Esophagus muscularis mucosa (tissue), 4 donors: ENCODE measurements at regions of chr12 and their contacts with region 1.

Region 1: GRCh38 chr12:8078398-8078797 is 3.7 kb upstream of the NECAP1 start:
- DNase-seq: no peak
- H3K4me3 ChIP-seq: no peak overlapping the region
- H3K27ac ChIP-seq: no peak overlapping the region
- H3K4me1 ChIP-seq: peaks cover 12 to 18% (median 15%) of the 10 kb centered on the region in 4 donors
- H3K27me3 ChIP-seq: no peaks in the 10 kb centered on the region
- CTCF ChIP-seq: peak in 1 of 3 experiments; percentile 20
- EP300 ChIP-seq: no peak
- POLR2A ChIP-seq: no peak

Region 2: DNA sequence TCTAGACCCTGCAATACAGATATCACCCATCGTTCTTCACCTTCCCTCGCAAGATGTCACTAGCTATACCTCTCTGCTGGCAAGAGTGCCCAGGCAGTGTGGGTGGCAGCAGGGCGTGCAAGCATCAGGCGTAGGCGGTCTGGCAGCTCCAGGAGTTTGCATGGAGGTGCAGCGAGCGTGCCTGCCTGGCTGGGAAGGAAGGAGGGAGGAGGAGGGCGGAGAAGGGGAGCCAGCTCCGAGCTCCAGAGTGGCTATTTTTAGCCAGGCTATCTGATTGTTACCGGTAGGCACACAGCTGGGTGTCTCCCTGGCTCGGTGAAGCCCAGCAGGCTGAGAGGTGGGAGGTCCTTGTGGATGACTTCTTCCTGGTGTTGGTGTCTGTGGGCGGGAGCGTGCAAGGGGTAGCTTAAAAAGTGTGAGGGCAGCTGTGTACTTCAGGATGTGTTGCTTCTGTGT is 39.7 kb before region 1 on chr12:
- intact Hi-C with region 1: loop called (anchors 5 kb)
- DNase-seq: no peak
- H3K4me3 ChIP-seq: peak overlapping the region; percentile 32 to 49 (median 34)
- H3K27ac ChIP-seq: peak overlapping the region; percentile 98 to 99 (median 99)
- H3K4me1 ChIP-seq: peaks cover 60 to 64% (median 62%) of the 10 kb centered on the region in 4 donors
- H3K27me3 ChIP-seq: no peaks in the 10 kb centered on the region
- CTCF ChIP-seq: no peak
- EP300 ChIP-seq: no peak
- POLR2A ChIP-seq: no peak

Region 3: DNA sequence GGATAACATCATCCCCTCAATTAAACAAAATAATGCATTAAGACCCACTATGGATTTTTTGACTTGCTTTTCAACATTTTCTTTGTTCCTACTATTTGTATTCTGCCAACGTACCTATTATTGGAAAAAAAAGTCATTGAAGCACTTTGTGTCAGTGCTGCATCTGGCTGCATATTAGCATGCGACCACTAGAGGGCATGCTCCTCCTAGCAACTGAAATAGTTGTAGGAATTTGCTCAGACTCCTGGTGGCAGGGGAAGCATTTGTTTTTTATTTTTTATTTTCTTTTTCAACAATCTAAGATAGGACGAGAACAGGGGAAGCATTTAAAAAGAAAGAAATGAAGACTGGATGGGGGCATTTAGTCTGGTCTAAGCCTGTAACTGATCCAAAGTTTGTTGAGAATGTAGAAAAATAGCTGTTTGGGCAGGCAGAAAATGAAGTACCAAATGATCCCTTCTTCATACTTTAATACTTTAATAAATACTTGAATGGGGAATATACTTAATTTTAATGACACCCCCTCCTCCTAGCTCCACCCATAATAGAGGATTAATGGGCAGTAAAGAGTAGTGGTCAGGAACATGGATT is 30.5 kb after region 1 on chr12:
- intact Hi-C with region 1: no loop called
- DNase-seq: no peak
- H3K4me3 ChIP-seq: no peak overlapping the region
- H3K27ac ChIP-seq: no peak overlapping the region
- H3K4me1 ChIP-seq: peaks cover 0 to 8% (median 0%) of the 10 kb centered on the region in 4 donors
- H3K27me3 ChIP-seq: no peaks in the 10 kb centered on the region
- CTCF ChIP-seq: peak; percentile 89 to 95 (median 92)
- EP300 ChIP-seq: no peak
- POLR2A ChIP-seq: no peak

Region 4: DNA sequence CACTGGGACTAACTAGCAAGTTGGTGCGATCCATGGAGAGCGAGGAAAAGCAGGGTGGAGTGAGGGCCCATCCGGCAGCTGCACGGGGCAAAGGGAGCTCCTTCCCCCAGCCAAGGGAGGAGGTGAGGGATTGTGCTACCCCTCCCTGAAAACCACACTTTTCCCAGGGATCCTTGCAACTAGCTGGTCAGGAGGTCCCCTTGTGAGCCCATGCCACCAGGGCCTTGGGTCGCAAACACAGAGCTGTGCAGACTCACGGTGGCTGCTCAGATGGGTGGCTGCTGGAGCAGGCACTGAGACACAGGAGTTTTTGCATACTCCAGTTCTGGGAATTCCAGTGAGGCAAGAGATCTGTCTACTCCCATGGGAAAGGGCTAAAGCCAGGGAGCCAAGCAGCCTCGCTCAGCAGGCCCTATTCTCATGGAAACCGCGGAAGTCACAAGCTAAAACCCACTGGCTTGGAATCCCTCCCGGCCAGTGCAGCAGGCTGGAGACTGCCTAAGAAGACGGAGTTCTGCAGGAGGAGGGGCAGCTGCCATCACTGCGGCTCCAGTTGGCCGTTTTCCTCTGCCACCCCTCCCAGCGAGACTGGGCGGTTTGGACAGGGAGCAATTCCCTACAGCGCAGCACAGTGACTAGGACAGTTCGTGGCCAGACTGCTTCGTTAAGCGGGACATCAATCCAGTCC is 67.5 kb after region 1 on chr12:
- intact Hi-C with region 1: no loop called
- DNase-seq: no peak
- H3K4me3 ChIP-seq: peak overlapping the region in 3 of 4 donors; percentile 26 to 29 (median 27)
- H3K27ac ChIP-seq: no peak overlapping the region
- H3K4me1 ChIP-seq: peaks cover 0 to 13% (median 11%) of the 10 kb centered on the region in 4 donors
- H3K27me3 ChIP-seq: no peaks in the 10 kb centered on the region
- CTCF ChIP-seq: no peak
- EP300 ChIP-seq: no peak
- POLR2A ChIP-seq: no peak